Heart right ventricle (tissue), 16 donors: ENCODE measurements at regions of chr7 and their contacts with region 1.

Region 1: GRCh38 chr7:143901668-143902331 is at the start of gene TCAF1:
- DNase-seq: peak; percentile 96 to 98
- ATAC-seq: peak; percentile 98 to 99 (median 99)
- H3K4me3 ChIP-seq: peak within 1 kb of the TSS; percentile 59 to 96 (median 75)
- H3K27ac ChIP-seq: peak within 1 kb of the TSS; percentile 87 to 98 (median 95)
- H3K4me1 ChIP-seq: peaks cover 0 to 46% (median 29%) of the 10 kb centered on the region in 9 donors
- H3K27me3 ChIP-seq: no peaks in the 10 kb centered on the region
- CTCF ChIP-seq: peak in 8 of 9 donors; percentile 7 to 50 (median 33)
- total RNA-seq, gene TCAF1: 44.3 to 62.8 (median 59.1) TPM

Region 2: GRCh38 chr7:143958781-143959180 is 57.0 kb after region 1 on chr7:
- intact Hi-C with region 1: no loop called
- DNase-seq: no peak
- ATAC-seq: no peak
- H3K4me3 ChIP-seq: no peak overlapping the region
- H3K27ac ChIP-seq: no peak overlapping the region
- H3K4me1 ChIP-seq: no peaks in the 10 kb centered on the region
- H3K27me3 ChIP-seq: peaks cover 0 to 4% (median 0%) of the 10 kb centered on the region in 7 donors
- CTCF ChIP-seq: no peak

Region 3: DNA sequence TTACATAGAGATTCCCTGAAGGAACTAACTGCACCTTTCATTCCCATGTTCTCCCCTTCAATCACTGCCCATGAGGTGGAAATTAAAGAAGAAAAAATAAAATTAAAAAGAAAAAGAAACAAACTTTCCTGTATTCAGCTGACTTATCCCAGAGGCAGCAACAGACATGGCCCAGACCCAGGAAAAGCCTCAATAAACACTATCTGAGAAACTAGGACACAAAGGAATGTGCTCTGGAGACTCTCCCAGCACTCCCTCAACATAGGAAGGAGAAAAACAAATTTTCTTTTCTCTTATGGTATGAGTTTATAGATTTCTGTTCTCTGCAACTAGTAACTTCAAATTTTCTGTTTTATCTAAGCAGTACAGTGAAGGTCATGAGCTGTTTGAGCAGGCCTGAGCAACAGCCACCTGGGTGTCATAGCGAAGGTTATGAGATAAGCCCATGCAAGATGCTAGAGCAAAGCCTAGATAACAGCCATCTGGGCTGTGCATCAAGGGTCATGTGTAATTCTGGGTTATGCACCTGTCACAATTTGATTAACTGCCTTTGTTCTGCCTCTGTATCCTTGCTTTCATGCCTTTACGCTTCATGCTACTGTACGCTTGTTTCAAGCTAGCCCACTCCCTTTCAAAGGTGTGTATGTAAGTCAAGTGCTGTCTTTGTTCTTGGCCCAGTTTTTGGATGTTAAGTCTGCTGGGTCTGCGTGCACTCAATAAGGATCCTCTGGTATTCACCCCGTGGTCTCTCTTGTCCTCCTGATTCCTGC is 87.4 kb after region 1 on chr7:
- intact Hi-C with region 1: loop called in 1 of 10 experiments (anchors 10 kb)
- DNase-seq: no peak
- ATAC-seq: no peak
- H3K4me3 ChIP-seq: no peak overlapping the region
- H3K27ac ChIP-seq: peak overlapping the region in 1 of 10 donors; percentile 24
- H3K4me1 ChIP-seq: peaks cover 0 to 25% (median 4%) of the 10 kb centered on the region in 9 donors
- H3K27me3 ChIP-seq: no peaks in the 10 kb centered on the region
- CTCF ChIP-seq: no peak

Region 4: DNA sequence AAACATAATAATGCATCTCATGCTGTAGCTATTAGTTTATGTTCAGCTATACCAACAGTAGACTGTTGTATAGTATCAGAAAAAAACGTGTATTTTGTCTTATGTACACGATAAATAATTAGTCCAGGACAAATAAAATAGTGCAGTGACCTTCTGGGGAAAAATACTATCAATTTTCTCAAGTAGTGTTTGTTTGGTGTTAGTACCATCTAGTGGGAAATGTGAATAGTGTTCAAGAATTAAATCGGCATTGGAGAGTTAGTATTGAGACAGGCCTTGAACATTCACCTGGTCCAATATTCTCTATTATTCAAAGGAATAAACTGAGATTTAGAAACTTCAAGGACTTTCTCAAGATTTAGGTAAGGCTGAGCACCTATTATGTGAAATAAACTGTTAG is 125.3 kb after region 1 on chr7:
- intact Hi-C with region 1: loop called in 4 of 10 experiments (anchors 5 to 10 kb)
- DNase-seq: no peak
- ATAC-seq: peak in 4 of 8 donors; percentile 46 to 57 (median 53)
- H3K4me3 ChIP-seq: no peak overlapping the region
- H3K27ac ChIP-seq: no peak overlapping the region
- H3K4me1 ChIP-seq: no peaks in the 10 kb centered on the region
- H3K27me3 ChIP-seq: peaks cover 0 to 4% (median 0%) of the 10 kb centered on the region in 7 donors
- CTCF ChIP-seq: peak; percentile 30 to 73 (median 56)

Region 5: DNA sequence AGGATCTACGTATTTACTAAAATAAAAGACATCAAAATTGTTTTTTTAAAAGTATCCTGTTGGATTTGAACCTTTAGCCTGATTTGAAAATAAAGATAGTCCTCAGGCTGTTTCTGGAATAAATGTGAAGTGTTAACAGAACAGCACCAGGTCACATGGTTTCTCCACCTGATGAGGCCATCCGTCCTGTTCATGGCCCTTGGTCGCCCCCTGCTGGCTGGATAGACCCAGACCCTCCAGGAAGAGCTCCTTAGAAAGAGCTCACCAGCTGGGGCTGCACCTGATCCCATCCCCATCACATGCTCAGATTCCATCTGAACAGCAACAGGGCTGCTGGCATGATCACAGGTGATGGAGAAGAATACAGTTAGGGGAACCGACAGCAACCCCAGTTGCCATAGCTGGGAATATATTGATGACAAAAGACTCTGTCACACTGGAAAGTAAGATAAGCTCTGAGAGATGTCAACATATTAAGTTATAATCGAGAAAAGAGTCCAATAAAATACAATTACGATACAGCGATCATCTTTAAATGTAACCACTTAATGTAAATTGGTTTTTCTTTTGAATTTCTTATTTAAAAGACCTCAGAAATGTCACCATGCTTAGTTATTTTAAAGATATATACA is 226.0 kb after region 1 on chr7:
- intact Hi-C with region 1: loop called in 1 of 10 experiments (anchors 5 kb)
- DNase-seq: peak; percentile 85
- ATAC-seq: peak in 7 of 8 donors; percentile 78 to 90 (median 80)
- H3K4me3 ChIP-seq: no peak overlapping the region
- H3K27ac ChIP-seq: no peak overlapping the region
- H3K4me1 ChIP-seq: no peaks in the 10 kb centered on the region
- H3K27me3 ChIP-seq: no peaks in the 10 kb centered on the region
- CTCF ChIP-seq: peak; percentile 67 to 86 (median 80)

Region 6: DNA sequence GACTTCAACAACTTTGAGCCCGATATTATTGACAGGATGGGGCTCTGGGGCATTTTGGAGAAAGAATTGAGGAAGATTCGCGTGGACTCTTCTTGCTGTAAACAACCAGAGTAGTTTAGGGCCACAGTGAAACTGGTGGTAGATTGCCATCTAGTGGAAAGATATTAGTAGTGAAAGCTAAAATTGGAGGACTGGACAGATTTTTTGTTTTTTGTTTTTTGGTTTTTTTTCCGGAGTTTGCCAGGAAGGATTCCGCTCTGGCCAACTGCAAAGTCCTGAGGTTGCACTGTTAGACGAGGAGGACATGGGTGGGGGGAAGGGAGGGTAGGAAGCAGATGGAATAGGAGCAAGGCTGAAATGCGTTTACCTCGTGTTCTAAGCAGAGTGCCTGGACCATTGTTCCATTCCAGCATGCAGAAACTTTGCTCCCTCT is 490.0 kb after region 1 on chr7:
- intact Hi-C with region 1: loop called in 1 of 10 experiments (anchors 10 kb)
- DNase-seq: peak in 1 of 2 donors; percentile 24
- ATAC-seq: peak in 7 of 8 donors; percentile 52 to 87 (median 80)
- H3K4me3 ChIP-seq: no peak overlapping the region
- H3K27ac ChIP-seq: no peak overlapping the region
- H3K4me1 ChIP-seq: peaks cover 0 to 13% (median 0%) of the 10 kb centered on the region in 9 donors
- H3K27me3 ChIP-seq: peaks cover 0 to 3% (median 0%) of the 10 kb centered on the region in 7 donors
- CTCF ChIP-seq: peak; percentile 36 to 80 (median 71)